CD14-positive monocyte (primary cell): ENCODE measurements at regions of chr2 and their contacts with region 1.

Region 1: GRCh38 chr2:118940486-118941205 is 1.3 kb upstream of the MARCO start:
- DNase-seq: peak; percentile 77 to 93 (median 93)
- H3K4me3 ChIP-seq: peak overlapping the region in 2 of 3 experiments; percentile 12 to 60
- H3K4me3 Mint-ChIP-seq: peak overlapping the region; percentile 59 to 75
- H3K27ac ChIP-seq: peak overlapping the region; percentile 91 to 93
- H3K27ac Mint-ChIP-seq: peak overlapping the region; percentile 94 to 97 (median 95)
- H3K4me1 ChIP-seq: peaks cover 89 to 96% of the 10 kb centered on the region in 2 donors
- H3K4me1 Mint-ChIP-seq: peaks cover 54% of the 10 kb centered on the region
- H3K27me3 ChIP-seq: no peaks in the 10 kb centered on the region
- H3K27me3 Mint-ChIP-seq: peaks cover 0 to 2% (median 0%) of the 10 kb centered on the region in 3 donors
- CTCF ChIP-seq: peak; percentile 10

Region 2: DNA sequence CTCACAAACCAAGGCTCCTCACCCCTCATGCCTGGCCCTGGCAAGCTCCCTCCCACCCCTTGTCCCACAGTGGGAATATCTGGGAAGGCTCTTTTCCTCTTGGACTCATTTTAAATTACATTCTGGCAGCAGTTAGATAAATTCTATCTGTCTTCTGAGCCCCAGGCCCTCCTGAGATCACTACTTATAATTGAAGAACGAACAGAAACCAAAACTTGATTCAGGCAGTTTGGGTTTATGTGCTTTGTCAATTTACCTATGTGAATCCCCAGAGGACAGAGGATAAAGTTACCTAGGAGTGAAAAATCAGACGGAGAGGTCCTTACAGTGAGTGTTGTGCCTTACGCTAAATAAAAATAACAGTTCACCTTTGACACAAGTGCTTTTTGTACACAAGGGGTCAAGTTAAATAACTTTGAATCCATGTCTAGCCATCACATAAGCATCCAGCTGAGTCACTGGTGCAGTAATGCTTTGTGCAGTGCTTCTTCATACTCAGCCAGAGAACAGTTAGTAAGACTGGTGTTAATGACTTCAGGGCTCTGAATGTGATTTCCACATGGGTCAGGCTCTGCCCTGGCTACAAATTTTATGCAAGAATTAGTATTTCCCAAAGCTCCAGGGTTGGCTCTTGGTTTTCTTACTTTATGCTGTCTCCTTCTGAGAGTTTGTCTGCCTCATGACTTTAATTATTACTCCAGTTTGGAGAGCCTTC is 523.1 kb before region 1 on chr2:
- intact Hi-C with region 1: no loop called
- DNase-seq: no peak
- H3K4me3 ChIP-seq: no peak overlapping the region
- H3K4me3 Mint-ChIP-seq: no peak overlapping the region
- H3K27ac ChIP-seq: no peak overlapping the region
- H3K27ac Mint-ChIP-seq: no peak overlapping the region
- H3K4me1 ChIP-seq: no peaks in the 10 kb centered on the region
- H3K4me1 Mint-ChIP-seq: no peaks in the 10 kb centered on the region
- H3K27me3 ChIP-seq: no peaks in the 10 kb centered on the region
- H3K27me3 Mint-ChIP-seq: peaks cover 0 to 1% (median 0%) of the 10 kb centered on the region in 3 donors
- CTCF ChIP-seq: no peak

Region 3: GRCh38 chr2:118902266-118903028 is 38.2 kb before region 1 on chr2:
- intact Hi-C with region 1: loop called (anchors 5 kb)
- DNase-seq: peak; percentile 75 to 93 (median 87)
- H3K4me3 ChIP-seq: peak overlapping the region; percentile 1 to 67 (median 14)
- H3K4me3 Mint-ChIP-seq: peak overlapping the region; percentile 67 to 88
- H3K27ac ChIP-seq: peak overlapping the region; percentile 34 to 77
- H3K27ac Mint-ChIP-seq: peak overlapping the region; percentile 83 to 95 (median 93)
- H3K4me1 ChIP-seq: peaks cover 29 to 30% of the 10 kb centered on the region in 2 donors
- H3K4me1 Mint-ChIP-seq: peaks cover 34% of the 10 kb centered on the region
- H3K27me3 ChIP-seq: no peaks in the 10 kb centered on the region
- H3K27me3 Mint-ChIP-seq: peaks cover 4 to 15% (median 9%) of the 10 kb centered on the region in 3 donors
- CTCF ChIP-seq: no peak

Region 4: GRCh38 chr2:119158563-119159347 is 218.1 kb after region 1 on chr2 and contains the start of gene C1QL2:
- intact Hi-C with region 1: no loop called
- DNase-seq: no peak
- H3K4me3 ChIP-seq: no peak within 1 kb of the TSS
- H3K4me3 Mint-ChIP-seq: peak within 1 kb of the TSS in 1 of 2 donors; percentile 85
- H3K27ac ChIP-seq: no peak within 1 kb of the TSS
- H3K27ac Mint-ChIP-seq: no peak within 1 kb of the TSS
- H3K4me1 ChIP-seq: no peaks in the 10 kb centered on the region
- H3K4me1 Mint-ChIP-seq: no peaks in the 10 kb centered on the region
- H3K27me3 ChIP-seq: peaks cover 52 to 71% of the 10 kb centered on the region in 2 donors
- H3K27me3 Mint-ChIP-seq: peaks cover 62 to 81% (median 73%) of the 10 kb centered on the region in 3 donors
- CTCF ChIP-seq: no peak
- polyA plus RNA-seq, gene C1QL2: not detected